ENCODE measurements at regions of chr12 and their contacts with region 1.

Region 1: GRCh38 chr12:122399592-122400373 is 22.7 kb downstream of the CLIP1 start:
- DNase-seq: peak; percentile 82 to 90
- H3K4me3 ChIP-seq: peak overlapping the region; percentile 46; the same call in 1 of the 2 replicates
- H3K27ac ChIP-seq: peak overlapping the region; percentile 100
- H3K4me1 ChIP-seq: peaks cover 26% of the 10 kb centered on the region
- H3K27me3 ChIP-seq: no peaks in the 10 kb centered on the region
- CTCF ChIP-seq: peak; percentile 80

Region 2: GRCh38 chr12:122204167-122205062 is 195.4 kb before region 1 on chr12:
- CTCF ChIA-PET with region 1: no interaction called
- POLR2A ChIA-PET with region 1: no interaction called
- intact Hi-C with region 1: no loop called
- DNase-seq: no peak
- H3K4me3 ChIP-seq: peak overlapping the region; percentile 57; the same call in 1 of the 2 replicates
- H3K27ac ChIP-seq: no peak overlapping the region
- H3K4me1 ChIP-seq: peaks cover 6% of the 10 kb centered on the region; the same call in 1 of the 2 replicates
- H3K27me3 ChIP-seq: no peaks in the 10 kb centered on the region
- CTCF ChIP-seq: no peak

Region 3: GRCh38 chr12:122363782-122364181 is 36.0 kb before region 1 on chr12:
- CTCF ChIA-PET with region 1: no interaction called
- POLR2A ChIA-PET with region 1: no interaction called
- intact Hi-C with region 1: no loop called
- DNase-seq: no peak
- H3K4me3 ChIP-seq: no peak overlapping the region
- H3K27ac ChIP-seq: no peak overlapping the region
- H3K4me1 ChIP-seq: peaks cover 18% of the 10 kb centered on the region
- H3K27me3 ChIP-seq: no peaks in the 10 kb centered on the region
- CTCF ChIP-seq: no peak

Region 4: GRCh38 chr12:122449353-122449752 is 49.6 kb after region 1 on chr12:
- CTCF ChIA-PET with region 1: interaction called, 6 read pairs
- POLR2A ChIA-PET with region 1: interaction called, 12 read pairs
- intact Hi-C with region 1: no loop called
- DNase-seq: peak; percentile 52 to 97
- H3K4me3 ChIP-seq: no peak overlapping the region
- H3K27ac ChIP-seq: peak overlapping the region; percentile 89
- H3K4me1 ChIP-seq: peaks cover 21% of the 10 kb centered on the region
- H3K27me3 ChIP-seq: no peaks in the 10 kb centered on the region
- CTCF ChIP-seq: no peak

Region 5: DNA sequence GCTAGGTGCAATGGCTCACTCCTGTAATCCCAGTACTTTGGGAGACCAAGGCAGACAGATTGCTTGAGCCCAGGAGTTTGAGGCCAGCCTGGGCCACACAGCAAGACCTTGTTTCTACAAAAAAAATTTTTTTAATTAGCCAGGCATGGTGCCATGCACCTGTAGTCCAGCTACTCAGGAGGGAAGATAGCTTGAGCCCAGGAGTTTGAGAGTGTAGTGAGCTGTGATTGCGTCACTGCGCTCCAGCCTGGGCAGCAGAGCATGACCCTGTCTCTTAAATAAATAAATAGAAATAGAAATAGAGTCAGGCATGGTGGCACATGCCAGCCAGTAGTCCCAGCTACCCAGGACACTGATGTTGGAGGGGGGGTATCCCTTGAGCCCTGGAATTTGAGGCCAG is 59.4 kb after region 1 on chr12:
- CTCF ChIA-PET with region 1: interaction called, 3 read pairs
- POLR2A ChIA-PET with region 1: interaction called, 4 read pairs
- intact Hi-C with region 1: loop called (anchors 1 kb)
- DNase-seq: no peak
- H3K4me3 ChIP-seq: no peak overlapping the region
- H3K27ac ChIP-seq: no peak overlapping the region
- H3K4me1 ChIP-seq: peaks cover 15% of the 10 kb centered on the region
- H3K27me3 ChIP-seq: no peaks in the 10 kb centered on the region
- CTCF ChIP-seq: no peak